IMR-90 (cell line): ENCODE measurements at regions of chr9 and their contacts with region 1.

Region 1: GRCh38 chr9:130860458-130861316 is 25.6 kb downstream of the ABL1 start:
- DNase-seq: peak; percentile 99
- ATAC-seq: peak; percentile 87
- H3K4me3 ChIP-seq: no peak overlapping the region
- H3K27ac ChIP-seq: peak overlapping the region; percentile 53
- H3K4me1 ChIP-seq: peaks cover 35% of the 10 kb centered on the region
- H3K27me3 ChIP-seq: no peaks in the 10 kb centered on the region
- CTCF ChIP-seq: peak; percentile 55
- POLR2A ChIP-seq: peak; percentile 88
- RAD21 ChIP-seq: peak; percentile 73

Region 2: DNA sequence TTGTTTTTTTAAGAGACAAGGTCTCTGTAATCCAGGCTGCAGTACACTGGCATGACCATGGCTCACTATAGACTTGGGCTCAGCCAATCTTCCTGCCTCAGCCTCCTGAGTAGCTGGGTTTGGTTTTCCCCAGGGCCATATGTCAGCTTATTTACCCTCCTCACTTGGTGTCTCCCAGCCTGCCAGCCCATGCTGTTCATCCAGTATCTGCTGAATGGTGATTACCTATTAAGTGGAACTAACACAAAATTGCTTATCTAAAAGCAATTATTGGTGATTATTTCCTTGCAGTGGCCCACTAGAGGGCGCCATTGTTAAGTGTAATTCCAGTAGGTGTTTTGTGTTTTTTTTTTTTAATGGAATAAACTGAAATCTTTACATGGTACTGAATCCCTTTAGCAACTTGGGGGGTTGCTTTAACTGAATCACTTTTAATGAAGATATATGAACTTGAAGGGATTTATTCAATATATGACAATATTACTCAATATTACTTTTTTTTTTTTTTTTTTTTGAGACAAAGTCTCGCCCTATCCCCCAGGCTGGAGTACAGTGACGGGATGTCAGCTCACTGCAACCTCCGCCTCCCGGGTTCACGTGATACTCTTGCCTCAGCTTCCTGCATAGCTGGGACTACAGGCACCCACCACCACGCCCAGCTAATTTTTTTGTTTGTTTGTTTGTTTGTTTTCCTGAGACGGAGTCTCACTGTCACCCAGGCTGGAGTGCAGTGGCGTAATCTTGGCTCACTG is 153.3 kb before region 1 on chr9:
- CTCF ChIA-PET with region 1: interaction called, 5 read pairs
- POLR2A ChIA-PET with region 1: no interaction called
- dilution Hi-C with region 1: no loop called
- in situ Hi-C with region 1: loop called (anchors 5 kb)
- intact Hi-C with region 1: loop called (anchors 1 kb)
- DNase-seq: peak; percentile 68
- ATAC-seq: peak; percentile 64
- H3K4me3 ChIP-seq: no peak overlapping the region
- H3K27ac ChIP-seq: no peak overlapping the region
- H3K4me1 ChIP-seq: peaks cover 4% of the 10 kb centered on the region; the same call in 1 of the 2 replicates
- H3K27me3 ChIP-seq: no peaks in the 10 kb centered on the region
- CTCF ChIP-seq: peak; percentile 84
- POLR2A ChIP-seq: peak; percentile 36; the same call in 1 of the 2 replicates
- RAD21 ChIP-seq: peak; percentile 81

Region 3: DNA sequence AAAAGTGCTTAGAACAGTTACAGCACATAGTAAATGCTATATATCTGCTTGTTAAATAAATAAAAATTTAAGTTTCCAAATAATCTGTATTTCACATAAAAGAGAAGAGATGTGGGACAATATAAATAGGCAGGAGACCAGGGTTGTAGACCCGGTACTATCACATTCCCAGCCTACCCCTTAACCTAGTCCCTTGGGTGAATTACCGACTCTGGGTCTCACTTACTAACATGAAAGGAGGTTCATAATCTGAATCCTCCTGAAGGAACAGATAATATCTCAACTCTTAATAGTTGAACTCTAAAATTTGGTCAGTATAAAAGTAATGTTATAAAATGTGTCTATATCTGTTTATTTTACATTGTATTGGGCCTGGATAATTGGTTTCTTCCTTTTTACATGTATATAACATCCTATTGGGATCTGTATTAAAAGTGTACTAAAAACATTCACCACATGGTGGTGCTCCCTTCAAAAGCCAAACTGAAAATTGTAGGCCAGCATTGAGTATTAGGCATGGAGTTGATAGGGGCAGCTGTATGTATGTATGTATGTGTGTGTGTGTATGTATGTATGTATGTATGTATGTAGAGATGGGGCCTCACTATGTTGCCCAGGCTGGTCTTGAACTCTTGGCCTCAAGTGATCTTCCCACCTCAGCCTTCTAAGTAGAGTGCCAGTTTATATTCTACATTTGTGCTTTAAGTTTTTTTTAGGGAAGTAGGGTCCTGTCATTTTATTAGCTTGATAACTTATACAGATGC is 89.8 kb before region 1 on chr9:
- CTCF ChIA-PET with region 1: interaction called, 4 read pairs
- POLR2A ChIA-PET with region 1: no interaction called
- dilution Hi-C with region 1: no loop called
- in situ Hi-C with region 1: loop called (anchors 5 kb)
- intact Hi-C with region 1: loop called (anchors 1 kb)
- DNase-seq: peak; percentile 82
- ATAC-seq: peak; percentile 91
- H3K4me3 ChIP-seq: no peak overlapping the region
- H3K27ac ChIP-seq: no peak overlapping the region
- H3K4me1 ChIP-seq: peaks cover 20% of the 10 kb centered on the region
- H3K27me3 ChIP-seq: no peaks in the 10 kb centered on the region
- CTCF ChIP-seq: peak; percentile 74
- POLR2A ChIP-seq: no peak
- RAD21 ChIP-seq: peak; percentile 85

Region 4: GRCh38 chr9:130823435-130823834 is 37.3 kb before region 1 on chr9:
- CTCF ChIA-PET with region 1: no interaction called
- POLR2A ChIA-PET with region 1: interaction called, 18 read pairs
- dilution Hi-C with region 1: no loop called
- in situ Hi-C with region 1: no loop called
- intact Hi-C with region 1: no loop called
- DNase-seq: peak; percentile 69
- ATAC-seq: peak; percentile 48
- H3K4me3 ChIP-seq: no peak overlapping the region
- H3K27ac ChIP-seq: peak overlapping the region; percentile 96; the same call in 1 of the 2 replicates
- H3K4me1 ChIP-seq: peaks cover 15% of the 10 kb centered on the region
- H3K27me3 ChIP-seq: no peaks in the 10 kb centered on the region
- CTCF ChIP-seq: no peak
- POLR2A ChIP-seq: no peak
- RAD21 ChIP-seq: no peak

Region 5: DNA sequence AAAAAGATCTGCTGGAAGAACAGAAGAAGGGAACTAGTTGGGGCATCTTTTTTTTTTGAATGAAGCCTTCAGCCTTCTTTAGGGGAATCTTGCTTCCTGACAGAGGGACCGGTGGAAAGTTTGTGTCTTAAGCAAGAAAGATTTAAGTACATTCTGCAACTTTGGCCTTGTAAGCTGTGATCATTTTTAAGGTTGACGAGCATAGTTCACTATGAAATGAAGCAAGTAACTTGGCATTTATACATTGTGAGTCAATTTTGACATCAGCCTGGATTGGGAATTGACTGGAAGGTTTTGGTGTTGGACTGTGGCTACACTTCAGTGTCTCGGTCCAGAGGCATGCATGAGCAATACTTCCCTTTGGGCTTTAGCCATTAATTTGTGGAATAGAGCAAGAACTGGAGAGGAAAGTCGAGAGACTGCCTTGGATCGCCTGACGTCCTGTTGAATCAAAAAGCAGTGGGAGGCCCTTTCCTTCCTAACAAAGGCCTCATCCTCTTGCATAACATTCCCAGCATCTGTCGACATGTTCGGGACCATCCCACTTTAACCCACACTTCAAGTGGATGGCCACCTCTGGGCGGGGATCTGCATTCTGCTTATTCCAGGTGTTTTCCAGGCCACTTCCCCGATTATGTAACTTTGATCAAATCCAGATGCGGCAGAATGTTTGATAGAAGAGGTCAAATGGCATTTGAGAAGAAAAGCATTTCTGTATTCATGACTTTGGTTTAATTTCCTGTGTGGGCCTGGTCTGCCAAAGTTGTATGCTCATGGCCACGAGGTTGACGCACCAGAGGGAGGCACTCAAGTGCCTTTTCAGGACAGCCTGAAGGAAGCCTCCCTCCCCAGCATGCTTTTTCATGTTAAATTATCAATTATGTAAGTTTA is 13.1 kb before region 1 on chr9:
- CTCF ChIA-PET with region 1: no interaction called
- POLR2A ChIA-PET with region 1: no interaction called
- dilution Hi-C with region 1: no loop called
- in situ Hi-C with region 1: no loop called
- intact Hi-C with region 1: loop called (anchors 1 kb)
- DNase-seq: peak; percentile 100
- ATAC-seq: peak; percentile 76
- H3K4me3 ChIP-seq: no peak overlapping the region
- H3K27ac ChIP-seq: peak overlapping the region; percentile 73
- H3K4me1 ChIP-seq: peaks cover 27% of the 10 kb centered on the region
- H3K27me3 ChIP-seq: no peaks in the 10 kb centered on the region
- CTCF ChIP-seq: peak; percentile 39
- POLR2A ChIP-seq: peak; percentile 78
- RAD21 ChIP-seq: no peak; the same call in 1 of the 2 replicates

Region 6: GRCh38 chr9:131487621-131488031 is 626.9 kb after region 1 on chr9:
- CTCF ChIA-PET with region 1: no interaction called
- POLR2A ChIA-PET with region 1: no interaction called
- dilution Hi-C with region 1: no loop called
- in situ Hi-C with region 1: no loop called
- intact Hi-C with region 1: no loop called
- DNase-seq: no peak
- ATAC-seq: no peak; the same call in 1 of the 2 replicates
- H3K4me3 ChIP-seq: no peak overlapping the region
- H3K27ac ChIP-seq: no peak overlapping the region
- H3K4me1 ChIP-seq: no peaks in the 10 kb centered on the region
- H3K27me3 ChIP-seq: no peaks in the 10 kb centered on the region
- CTCF ChIP-seq: no peak
- POLR2A ChIP-seq: no peak
- RAD21 ChIP-seq: no peak